ENCODE measurements at regions of chr10 and their contacts with region 1.

Region 1: DNA sequence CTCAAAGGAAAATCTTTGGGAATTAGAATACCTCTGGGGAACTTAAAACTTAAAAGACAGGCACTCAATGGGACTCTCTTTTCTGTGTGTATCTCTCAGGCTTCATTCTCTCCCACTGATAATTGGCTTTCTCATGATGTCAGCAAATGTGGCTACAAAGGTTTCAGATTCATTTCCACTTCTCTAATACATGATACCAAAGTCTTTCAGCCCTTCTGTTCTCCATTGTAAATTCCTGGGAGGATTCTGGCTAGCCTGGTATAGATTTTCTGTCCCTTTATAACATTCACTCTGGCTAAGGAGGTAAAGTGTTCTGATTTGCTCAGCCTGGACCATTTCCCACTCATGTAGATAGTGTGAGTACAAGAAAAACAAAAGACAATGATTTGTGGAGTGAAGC is 606.2 kb downstream of the PCDH15 start:
- DNase-seq: no peak
- ATAC-seq: no peak
- H3K4me3 ChIP-seq: no peak overlapping the region
- H3K4me3 Mint-ChIP-seq: no peak overlapping the region
- H3K27ac ChIP-seq: no peak overlapping the region
- H3K27ac Mint-ChIP-seq: no peak overlapping the region
- H3K4me1 ChIP-seq: no peaks in the 10 kb centered on the region
- H3K4me1 Mint-ChIP-seq: no peaks in the 10 kb centered on the region
- H3K27me3 ChIP-seq: no peaks in the 10 kb centered on the region
- H3K27me3 Mint-ChIP-seq: no peaks in the 10 kb centered on the region
- CTCF ChIP-seq: no peak

Region 2: GRCh38 chr10:54234832-54235231 is 40.0 kb after region 1 on chr10:
- CTCF ChIA-PET with region 1: no interaction called
- POLR2A ChIA-PET with region 1: no interaction called
- intact Hi-C with region 1: no loop called
- DNase-seq: no peak
- ATAC-seq: no peak
- H3K4me3 ChIP-seq: no peak overlapping the region
- H3K4me3 Mint-ChIP-seq: no peak overlapping the region
- H3K27ac ChIP-seq: no peak overlapping the region
- H3K27ac Mint-ChIP-seq: no peak overlapping the region
- H3K4me1 ChIP-seq: no peaks in the 10 kb centered on the region
- H3K4me1 Mint-ChIP-seq: no peaks in the 10 kb centered on the region
- H3K27me3 ChIP-seq: no peaks in the 10 kb centered on the region
- H3K27me3 Mint-ChIP-seq: no peaks in the 10 kb centered on the region
- CTCF ChIP-seq: no peak

Region 3: DNA sequence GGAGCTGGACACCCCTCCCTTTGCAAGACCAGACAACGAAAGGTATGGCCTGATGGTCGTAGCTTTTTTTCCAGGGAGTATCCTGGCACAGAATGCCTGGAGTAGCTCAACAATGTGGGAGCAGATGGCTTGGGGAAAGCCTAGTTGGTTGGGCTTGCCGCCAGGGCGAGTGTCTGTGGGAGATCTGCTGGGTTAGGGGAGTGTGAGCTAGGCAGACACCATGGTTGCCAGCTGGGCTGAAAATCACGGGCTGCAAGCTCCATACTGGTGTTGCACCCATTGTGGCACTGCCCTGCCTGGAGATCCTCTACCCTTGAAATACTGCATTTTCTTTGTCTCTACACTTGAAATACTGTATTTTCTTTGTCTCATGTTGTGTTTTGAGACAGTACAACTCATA is 67.9 kb after region 1 on chr10:
- CTCF ChIA-PET with region 1: no interaction called
- POLR2A ChIA-PET with region 1: no interaction called
- intact Hi-C with region 1: loop called (anchors 2 kb)
- DNase-seq: no peak
- ATAC-seq: no peak
- H3K4me3 ChIP-seq: no peak overlapping the region
- H3K4me3 Mint-ChIP-seq: no peak overlapping the region
- H3K27ac ChIP-seq: no peak overlapping the region
- H3K27ac Mint-ChIP-seq: no peak overlapping the region
- H3K4me1 ChIP-seq: no peaks in the 10 kb centered on the region
- H3K4me1 Mint-ChIP-seq: no peaks in the 10 kb centered on the region
- H3K27me3 ChIP-seq: no peaks in the 10 kb centered on the region
- H3K27me3 Mint-ChIP-seq: no peaks in the 10 kb centered on the region
- CTCF ChIP-seq: no peak

Region 4: DNA sequence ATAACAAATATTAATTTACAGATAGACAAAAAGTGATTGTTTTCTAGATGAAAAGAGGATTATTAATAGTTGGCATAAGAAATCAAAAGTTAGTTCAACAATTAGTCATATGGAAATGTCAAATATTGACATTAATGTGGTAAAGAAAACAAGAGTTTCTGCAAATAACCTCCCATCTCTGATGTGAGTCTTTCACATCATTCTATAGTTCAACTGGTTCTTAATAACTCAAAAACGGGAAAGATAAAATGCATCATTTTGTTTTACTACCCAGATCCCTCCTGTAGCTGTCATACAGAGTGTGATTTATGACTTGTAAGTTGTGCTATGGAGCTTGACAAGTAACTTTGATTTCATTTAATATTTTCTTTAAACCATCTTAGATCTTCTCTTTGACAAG is 1571.4 kb after region 1 on chr10:
- CTCF ChIA-PET with region 1: no interaction called
- POLR2A ChIA-PET with region 1: no interaction called
- intact Hi-C with region 1: no loop called
- DNase-seq: no peak
- ATAC-seq: no peak
- H3K4me3 ChIP-seq: no peak overlapping the region
- H3K4me3 Mint-ChIP-seq: no peak overlapping the region
- H3K27ac ChIP-seq: no peak overlapping the region
- H3K27ac Mint-ChIP-seq: no peak overlapping the region
- H3K4me1 ChIP-seq: no peaks in the 10 kb centered on the region
- H3K4me1 Mint-ChIP-seq: no peaks in the 10 kb centered on the region
- H3K27me3 ChIP-seq: no peaks in the 10 kb centered on the region
- H3K27me3 Mint-ChIP-seq: no peaks in the 10 kb centered on the region
- CTCF ChIP-seq: no peak

Measured in B cell (primary cell).